Activated naive CD4-positive, alpha-beta T cell treated with anti-CD3 and anti-CD28 coated beads for 36 hours (primary cell): ENCODE measurements at regions of chr11 and their contacts with region 1.

Region 1: GRCh38 chr11:117126223-117126965 is 17.7 kb upstream of the PAFAH1B2 start:
- DNase-seq: no peak
- H3K4me3 Mint-ChIP-seq: no peak overlapping the region
- H3K27ac Mint-ChIP-seq: no peak overlapping the region
- H3K4me1 Mint-ChIP-seq: no peaks in the 10 kb centered on the region
- H3K27me3 Mint-ChIP-seq: no peaks in the 10 kb centered on the region

Region 2: GRCh38 chr11:116927163-116927974 is 199.0 kb before region 1 on chr11:
- CTCF ChIA-PET with region 1: no interaction called
- intact Hi-C with region 1: no loop called
- DNase-seq: peak; percentile 73
- H3K4me3 Mint-ChIP-seq: peak overlapping the region; percentile 34
- H3K27ac Mint-ChIP-seq: peak overlapping the region; percentile 75
- H3K4me1 Mint-ChIP-seq: peaks cover 61% of the 10 kb centered on the region
- H3K27me3 Mint-ChIP-seq: no peaks in the 10 kb centered on the region

Region 3: DNA sequence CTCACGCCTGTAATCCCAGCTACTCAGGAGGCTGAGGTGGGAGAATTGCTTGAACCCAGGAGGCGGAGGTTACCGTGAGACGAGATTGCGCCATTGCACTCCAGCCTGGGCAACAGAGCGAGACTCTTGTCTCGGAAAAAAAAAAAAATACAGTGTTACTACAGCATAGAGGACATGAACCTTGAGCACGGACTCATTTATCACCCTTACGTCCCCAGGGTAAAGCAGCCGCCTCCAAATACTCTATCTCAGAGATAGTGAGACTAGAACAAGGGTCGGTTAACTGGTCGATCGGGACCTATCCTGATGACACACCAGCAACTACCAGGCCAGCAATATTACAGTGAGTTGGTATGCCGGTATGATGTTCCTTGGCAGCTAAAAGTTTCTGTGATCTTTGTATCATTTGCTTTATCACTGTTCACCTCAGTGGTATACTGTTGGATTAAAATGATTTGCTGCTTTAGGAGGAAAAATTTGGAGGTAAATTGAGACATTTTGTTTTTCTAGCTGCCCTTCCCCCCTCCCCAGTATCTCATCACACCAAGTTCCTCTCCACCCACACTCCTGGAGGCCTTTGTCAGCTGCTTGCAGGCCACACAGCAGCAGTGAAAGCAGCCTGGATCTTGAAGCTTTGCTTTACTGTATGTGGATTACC is 45.1 kb after region 1 on chr11:
- CTCF ChIA-PET with region 1: interaction called, 3 read pairs
- intact Hi-C with region 1: loop called (anchors 1 kb)
- DNase-seq: no peak
- H3K4me3 Mint-ChIP-seq: no peak overlapping the region
- H3K27ac Mint-ChIP-seq: peak overlapping the region; percentile 18
- H3K4me1 Mint-ChIP-seq: peaks cover 9% of the 10 kb centered on the region
- H3K27me3 Mint-ChIP-seq: no peaks in the 10 kb centered on the region